Mammary epithelial cell (primary cell): ENCODE measurements at regions of chr17 and their contacts with region 1.

Region 1: GRCh38 chr17:31373150-31374093 is 18.1 kb upstream of the RAB11FIP4 start:
- DNase-seq: peak; percentile 39
- H3K4me3 ChIP-seq: no peak overlapping the region
- H3K27ac ChIP-seq: no peak overlapping the region
- H3K4me1 ChIP-seq: peaks cover 3% of the 10 kb centered on the region
- H3K27me3 ChIP-seq: no peaks in the 10 kb centered on the region
- CTCF ChIP-seq: peak; percentile 61 to 67

Region 2: GRCh38 chr17:31008374-31009041 is 364.9 kb before region 1 on chr17:
- CTCF ChIA-PET with region 1: no interaction called
- dilution Hi-C with region 1: no loop called
- in situ Hi-C with region 1: loop called in 1 of 2 experiments (anchors 25 kb)
- intact Hi-C with region 1: loop called (anchors 2 kb)
- DNase-seq: peak; percentile 72
- H3K4me3 ChIP-seq: peak overlapping the region; percentile 59 to 67 (median 60)
- H3K27ac ChIP-seq: peak overlapping the region; percentile 27
- H3K4me1 ChIP-seq: peaks cover 8% of the 10 kb centered on the region
- H3K27me3 ChIP-seq: no peaks in the 10 kb centered on the region
- CTCF ChIP-seq: peak in 1 of 2 donors; percentile 10

Region 3: DNA sequence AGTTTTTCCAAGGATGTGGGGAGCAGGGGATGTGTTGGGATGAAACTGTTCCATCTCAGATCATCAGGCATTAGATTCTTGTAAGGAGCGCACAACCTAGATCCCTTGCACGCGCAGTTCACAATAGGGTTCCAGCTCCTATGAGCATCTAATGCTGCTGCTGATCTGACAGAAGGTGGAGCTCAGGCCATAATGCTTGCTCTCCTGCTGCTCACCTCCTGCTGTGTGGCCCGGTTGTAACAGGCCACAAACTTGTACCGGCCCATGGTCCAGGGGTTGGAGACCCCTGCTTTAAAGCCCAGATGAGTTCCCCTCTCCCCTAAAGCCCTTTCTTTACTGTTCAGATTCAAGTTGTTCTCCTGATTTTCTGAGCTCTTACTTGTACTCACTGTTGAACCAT is 357.8 kb before region 1 on chr17:
- CTCF ChIA-PET with region 1: no interaction called
- dilution Hi-C with region 1: no loop called
- in situ Hi-C with region 1: loop called in 1 of 2 experiments (anchors 25 kb)
- intact Hi-C with region 1: loop called (anchors 2 kb)
- DNase-seq: no peak
- H3K4me3 ChIP-seq: no peak overlapping the region
- H3K27ac ChIP-seq: no peak overlapping the region
- H3K4me1 ChIP-seq: no peaks in the 10 kb centered on the region
- H3K27me3 ChIP-seq: no peaks in the 10 kb centered on the region
- CTCF ChIP-seq: no peak

Region 4: GRCh38 chr17:31231852-31232251 is 141.6 kb before region 1 on chr17:
- CTCF ChIA-PET with region 1: no interaction called
- dilution Hi-C with region 1: no loop called
- in situ Hi-C with region 1: loop called in 1 of 2 experiments (anchors 25 kb)
- intact Hi-C with region 1: loop called (anchors 5 kb)
- DNase-seq: no peak
- H3K4me3 ChIP-seq: no peak overlapping the region
- H3K27ac ChIP-seq: no peak overlapping the region
- H3K4me1 ChIP-seq: no peaks in the 10 kb centered on the region
- H3K27me3 ChIP-seq: no peaks in the 10 kb centered on the region
- CTCF ChIP-seq: no peak

Region 5: DNA sequence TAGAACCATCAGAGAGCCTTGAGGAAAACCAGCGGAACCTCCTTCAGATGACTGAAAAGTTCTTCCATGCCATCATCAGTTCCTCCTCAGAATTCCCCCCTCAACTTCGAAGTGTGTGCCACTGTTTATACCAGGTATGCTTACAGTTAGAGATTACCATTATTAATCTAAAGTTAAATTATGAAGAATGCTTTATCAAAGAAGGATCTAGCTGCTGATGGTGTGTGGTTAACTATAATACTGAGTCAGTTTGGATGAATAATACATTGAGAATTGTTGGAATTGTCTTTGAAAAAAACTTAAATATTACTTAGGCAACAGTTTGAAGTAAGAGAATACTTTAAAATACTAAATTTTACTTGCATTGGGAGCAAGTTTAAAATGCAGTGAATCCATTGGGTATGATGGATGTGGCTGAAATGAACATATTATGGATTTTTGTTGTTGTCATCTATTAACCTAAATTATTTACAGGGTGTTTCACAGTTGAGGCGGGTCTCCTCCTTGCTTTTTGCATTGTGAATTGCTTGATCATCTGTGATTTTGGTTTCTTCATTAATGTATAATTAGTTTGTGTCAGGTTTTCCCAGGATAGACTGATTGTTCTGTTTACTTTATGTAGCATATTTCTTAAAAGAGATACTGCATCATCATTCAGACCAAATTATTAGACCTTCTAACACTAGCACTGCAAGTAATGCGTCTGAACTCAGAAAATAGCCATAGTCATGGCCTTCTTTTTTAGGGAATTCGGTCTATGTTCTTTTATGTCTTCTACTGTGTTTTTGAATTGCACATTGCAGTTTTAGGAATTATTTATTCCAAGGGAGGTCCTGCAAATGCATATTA is 124.2 kb before region 1 on chr17:
- CTCF ChIA-PET with region 1: no interaction called
- dilution Hi-C with region 1: no loop called
- in situ Hi-C with region 1: loop called in 1 of 2 experiments (anchors 25 kb)
- intact Hi-C with region 1: no loop called
- DNase-seq: peak; percentile 66
- H3K4me3 ChIP-seq: no peak overlapping the region
- H3K27ac ChIP-seq: peak overlapping the region; percentile 53
- H3K4me1 ChIP-seq: peaks cover 31% of the 10 kb centered on the region
- H3K27me3 ChIP-seq: no peaks in the 10 kb centered on the region
- CTCF ChIP-seq: no peak

Region 6: DNA sequence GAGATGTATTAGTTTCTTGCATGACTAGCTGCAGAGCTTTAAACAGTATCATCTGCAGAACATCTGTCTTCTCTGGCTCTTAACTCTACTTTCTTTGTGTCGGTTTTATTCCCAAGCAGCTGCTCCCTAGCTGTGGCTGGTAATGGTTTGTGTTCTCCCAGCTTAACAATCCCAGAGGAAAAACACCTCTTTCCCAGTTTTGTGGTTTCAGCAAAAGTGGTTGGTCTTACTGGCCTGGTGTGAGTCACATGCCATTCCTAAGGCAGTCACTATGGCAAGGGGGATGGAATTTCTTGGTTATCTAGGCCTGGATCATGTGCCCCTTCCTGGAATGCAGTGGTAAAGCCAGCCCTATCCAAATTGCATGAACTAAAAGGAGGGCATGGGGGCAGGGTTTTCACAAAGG is 103.8 kb before region 1 on chr17:
- CTCF ChIA-PET with region 1: no interaction called
- dilution Hi-C with region 1: no loop called
- in situ Hi-C with region 1: no loop called
- intact Hi-C with region 1: no loop called
- DNase-seq: peak; percentile 72
- H3K4me3 ChIP-seq: no peak overlapping the region
- H3K27ac ChIP-seq: peak overlapping the region; percentile 43
- H3K4me1 ChIP-seq: peaks cover 30% of the 10 kb centered on the region
- H3K27me3 ChIP-seq: no peaks in the 10 kb centered on the region
- CTCF ChIP-seq: no peak